ENCODE measurements at regions of chr6 and their contacts with region 1.

Region 1: GRCh38 chr6:109440331-109441068 is at the starts of genes PPIL6 and SMPD2:
- DNase-seq: peak; percentile 77
- ATAC-seq: peak; percentile 89
- H3K4me3 ChIP-seq: peak within 1 kb of the TSS; percentile 92 to 100 (median 94)
- H3K27ac ChIP-seq: peak within 1 kb of the TSS; percentile 80
- H3K4me1 ChIP-seq: peaks cover 25% of the 10 kb centered on the region
- H3K27me3 ChIP-seq: no peaks in the 10 kb centered on the region; a peak in 1 of 5 replicates
- CTCF ChIP-seq: peak; percentile 59
- EP300 ChIP-seq: no peak; a peak in 1 of 4 replicates
- POLR2A ChIP-seq: peak; percentile 18 to 68; a peak in 2 of 4 replicates
- RAD21 ChIP-seq: peak; percentile 40
- total RNA-seq, gene PPIL6: 0.22 TPM in 1 of 2 replicates, not detected in the other
- total RNA-seq, gene SMPD2: 6.7 and 10.6 TPM in 2 replicates

Region 2: GRCh38 chr6:109455502-109456282 is 15.2 kb after region 1 on chr6 and contains the start of gene MICAL1:
- CTCF ChIA-PET with region 1: no interaction called
- POLR2A ChIA-PET with region 1: interaction called, 22 read pairs
- in situ Hi-C with region 1: no loop called
- intact Hi-C with region 1: loop called (anchors 1 kb)
- DNase-seq: peak; percentile 30
- ATAC-seq: peak; percentile 89
- H3K4me3 ChIP-seq: peak within 1 kb of the TSS; percentile 66 to 92 (median 90)
- H3K27ac ChIP-seq: no peak within 1 kb of the TSS
- H3K4me1 ChIP-seq: peaks cover 20% of the 10 kb centered on the region
- H3K27me3 ChIP-seq: no peaks in the 10 kb centered on the region
- CTCF ChIP-seq: peak; percentile 17; the same call in 1 of the 2 replicates
- EP300 ChIP-seq: no peak
- POLR2A ChIP-seq: peak; percentile 14 to 35; a peak in 2 of 4 replicates
- RAD21 ChIP-seq: 0 out of 2 replicates have a peak, but pooled peaks have one; percentile 29
- total RNA-seq, gene MICAL1: 1.9 and 6.9 TPM in 2 replicates

Region 3: GRCh38 chr6:109477725-109478124 is 37.2 kb after region 1 on chr6:
- CTCF ChIA-PET with region 1: no interaction called
- POLR2A ChIA-PET with region 1: interaction called, 3 read pairs
- in situ Hi-C with region 1: no loop called
- intact Hi-C with region 1: loop called (anchors 2 kb)
- DNase-seq: peak; percentile 40
- ATAC-seq: peak; percentile 86
- H3K4me3 ChIP-seq: peak overlapping the region in 2 of 3 experiments; percentile 3 to 40; a peak in 2 of 6 replicates
- H3K27ac ChIP-seq: peak overlapping the region; percentile 36
- H3K4me1 ChIP-seq: peaks cover 63% of the 10 kb centered on the region
- H3K27me3 ChIP-seq: no peaks in the 10 kb centered on the region
- CTCF ChIP-seq: no peak
- EP300 ChIP-seq: no peak
- POLR2A ChIP-seq: no peak
- RAD21 ChIP-seq: no peak

Measured in HepG2 (cell line).